Activated CD4-positive, alpha-beta T cell treated with anti-CD3 and anti-CD28 coated beads, Interleukin-2, amount 10 ng/mL, durations not matched to agents 24 days and 14 days (primary cell): ENCODE measurements at regions of chr16 and their contacts with region 1.

Region 1: DNA sequence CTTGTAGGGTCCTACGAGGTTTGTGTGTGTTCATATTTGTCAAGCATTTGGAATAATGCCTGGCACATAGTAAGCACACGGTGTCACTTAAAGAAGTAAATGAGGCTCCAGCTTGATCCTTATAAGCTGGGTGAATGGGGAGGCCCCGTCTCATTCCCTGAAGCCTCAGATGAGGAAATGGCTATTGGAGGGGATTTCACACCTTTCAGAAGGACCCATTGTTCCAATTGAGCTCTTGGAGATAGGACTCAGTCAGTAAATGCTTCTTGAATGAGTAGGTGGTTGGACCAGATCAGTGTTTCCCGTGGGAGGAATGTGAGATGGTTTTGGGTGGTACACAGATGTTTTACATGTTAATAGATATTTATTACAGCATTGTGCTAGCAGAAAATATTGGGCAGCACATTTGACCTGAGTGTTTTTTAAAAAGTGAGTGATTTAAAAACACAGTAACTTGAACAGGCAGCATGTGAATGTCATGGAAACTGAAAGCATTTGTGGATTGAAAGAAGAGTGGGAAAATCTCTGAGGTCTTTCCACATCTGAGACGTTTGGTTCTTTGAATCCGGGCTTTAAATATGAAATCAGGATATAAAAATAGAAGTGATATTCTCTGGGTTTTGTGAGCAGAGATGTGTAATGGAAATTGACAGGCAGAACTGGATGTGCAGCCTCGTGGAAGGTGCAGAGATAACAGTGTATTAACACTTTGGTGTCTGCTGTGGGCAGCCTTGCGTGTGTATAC is 36.4 kb upstream of the ARHGAP17 start:
- DNase-seq: peak; percentile 68
- H3K4me3 Mint-ChIP-seq: peak overlapping the region; percentile 57
- H3K27ac Mint-ChIP-seq: peak overlapping the region; percentile 74
- H3K4me1 Mint-ChIP-seq: peaks cover 51% of the 10 kb centered on the region
- H3K27me3 Mint-ChIP-seq: no peaks in the 10 kb centered on the region

Region 2: GRCh38 chr16:25014500-25015147 is 37.0 kb before region 1 on chr16:
- intact Hi-C with region 1: loop called (anchors 2 kb)
- DNase-seq: peak; percentile 73
- H3K4me3 Mint-ChIP-seq: peak overlapping the region; percentile 98
- H3K27ac Mint-ChIP-seq: peak overlapping the region; percentile 94
- H3K4me1 Mint-ChIP-seq: peaks cover 62% of the 10 kb centered on the region
- H3K27me3 Mint-ChIP-seq: no peaks in the 10 kb centered on the region

Region 3: GRCh38 chr16:25066747-25067631 is 15.4 kb after region 1 on chr16:
- intact Hi-C with region 1: loop called (anchors 2 kb)
- DNase-seq: peak; percentile 95
- H3K4me3 Mint-ChIP-seq: peak overlapping the region; percentile 92
- H3K27ac Mint-ChIP-seq: peak overlapping the region; percentile 87
- H3K4me1 Mint-ChIP-seq: peaks cover 35% of the 10 kb centered on the region
- H3K27me3 Mint-ChIP-seq: no peaks in the 10 kb centered on the region

Region 4: DNA sequence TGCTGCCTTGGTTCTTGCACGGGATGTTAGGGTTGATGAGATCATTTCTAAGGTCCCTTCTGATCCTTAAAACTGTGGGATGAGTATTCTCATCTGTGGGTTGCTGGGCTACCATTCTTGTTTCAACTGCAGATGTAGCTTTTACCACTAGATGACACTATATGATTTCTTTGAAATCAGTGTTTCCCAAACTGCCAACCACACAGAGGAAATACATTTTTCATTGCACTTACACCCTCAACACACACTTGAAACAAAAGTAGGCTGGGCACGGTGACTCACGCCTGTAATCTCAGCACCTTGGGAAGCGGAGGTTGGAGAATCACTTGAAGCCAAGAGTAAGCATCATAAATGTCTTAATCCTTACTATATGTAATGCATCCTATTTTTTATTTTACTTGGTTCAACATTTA is 75.2 kb after region 1 on chr16:
- intact Hi-C with region 1: loop called (anchors 1 kb)
- DNase-seq: peak; percentile 77
- H3K4me3 Mint-ChIP-seq: no peak overlapping the region
- H3K27ac Mint-ChIP-seq: peak overlapping the region; percentile 75
- H3K4me1 Mint-ChIP-seq: peaks cover 22% of the 10 kb centered on the region
- H3K27me3 Mint-ChIP-seq: no peaks in the 10 kb centered on the region